ENCODE measurements at regions of chr10 and their contacts with region 1.

Region 1: GRCh38 chr10:77710759-77711682 is 73.4 kb upstream of the KCNMA1 start:
- DNase-seq: peak; percentile 97
- ATAC-seq: peak; percentile 98
- H3K4me3 ChIP-seq: peak overlapping the region; percentile 57
- H3K27ac ChIP-seq: no peak overlapping the region
- H3K4me1 ChIP-seq: peaks cover 10% of the 10 kb centered on the region; the same call in 1 of the 2 replicates
- H3K27me3 ChIP-seq: no peaks in the 10 kb centered on the region
- CTCF ChIP-seq: peak; percentile 100

Region 2: DNA sequence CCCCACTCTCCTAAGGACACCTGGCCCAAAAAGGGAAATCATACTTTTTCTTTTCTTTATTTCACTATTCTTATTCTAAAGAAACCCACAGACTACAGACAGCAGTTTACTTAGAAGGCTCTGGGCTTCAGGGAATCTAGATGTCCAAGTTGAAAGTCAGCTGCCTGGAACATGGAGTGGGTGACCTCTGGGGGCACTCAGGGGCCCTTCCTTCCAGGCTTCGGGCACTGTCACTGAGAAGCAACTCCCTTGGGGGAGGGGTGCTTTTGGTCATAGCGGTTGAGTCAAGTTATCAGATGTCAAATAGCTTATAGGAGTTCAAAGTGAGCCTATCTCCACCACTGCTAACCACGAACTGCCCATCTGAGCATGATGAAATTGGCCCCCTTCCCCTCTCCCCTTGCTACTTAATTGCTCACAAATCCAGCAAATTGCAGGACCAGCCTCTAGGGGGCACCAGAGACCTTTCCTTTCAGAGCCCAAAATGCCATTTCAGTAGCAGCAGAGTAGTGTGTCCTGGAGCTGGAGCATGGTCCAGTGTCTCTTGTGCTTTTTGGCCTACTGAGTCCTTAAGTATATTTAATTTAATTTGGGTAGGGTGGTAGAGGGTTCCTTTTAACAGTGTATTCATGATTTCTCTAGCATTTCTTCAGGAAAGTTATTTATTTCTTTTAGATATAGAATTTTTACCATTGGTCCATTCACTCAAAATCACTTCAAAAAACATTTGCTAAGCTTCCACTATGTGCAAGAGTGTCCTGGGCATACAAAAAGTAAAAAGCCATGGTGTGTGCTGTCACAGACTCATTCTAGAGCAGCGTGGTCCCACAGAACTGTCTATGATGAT is 537.2 kb before region 1 on chr10:
- CTCF ChIA-PET with region 1: interaction called, 28 read pairs
- POLR2A ChIA-PET with region 1: no interaction called
- intact Hi-C with region 1: loop called (anchors 2 kb)
- DNase-seq: peak; percentile 100
- ATAC-seq: peak; percentile 78
- H3K4me3 ChIP-seq: no peak overlapping the region
- H3K27ac ChIP-seq: no peak overlapping the region
- H3K4me1 ChIP-seq: peaks cover 16% of the 10 kb centered on the region
- H3K27me3 ChIP-seq: no peaks in the 10 kb centered on the region
- CTCF ChIP-seq: peak; percentile 100

Region 3: DNA sequence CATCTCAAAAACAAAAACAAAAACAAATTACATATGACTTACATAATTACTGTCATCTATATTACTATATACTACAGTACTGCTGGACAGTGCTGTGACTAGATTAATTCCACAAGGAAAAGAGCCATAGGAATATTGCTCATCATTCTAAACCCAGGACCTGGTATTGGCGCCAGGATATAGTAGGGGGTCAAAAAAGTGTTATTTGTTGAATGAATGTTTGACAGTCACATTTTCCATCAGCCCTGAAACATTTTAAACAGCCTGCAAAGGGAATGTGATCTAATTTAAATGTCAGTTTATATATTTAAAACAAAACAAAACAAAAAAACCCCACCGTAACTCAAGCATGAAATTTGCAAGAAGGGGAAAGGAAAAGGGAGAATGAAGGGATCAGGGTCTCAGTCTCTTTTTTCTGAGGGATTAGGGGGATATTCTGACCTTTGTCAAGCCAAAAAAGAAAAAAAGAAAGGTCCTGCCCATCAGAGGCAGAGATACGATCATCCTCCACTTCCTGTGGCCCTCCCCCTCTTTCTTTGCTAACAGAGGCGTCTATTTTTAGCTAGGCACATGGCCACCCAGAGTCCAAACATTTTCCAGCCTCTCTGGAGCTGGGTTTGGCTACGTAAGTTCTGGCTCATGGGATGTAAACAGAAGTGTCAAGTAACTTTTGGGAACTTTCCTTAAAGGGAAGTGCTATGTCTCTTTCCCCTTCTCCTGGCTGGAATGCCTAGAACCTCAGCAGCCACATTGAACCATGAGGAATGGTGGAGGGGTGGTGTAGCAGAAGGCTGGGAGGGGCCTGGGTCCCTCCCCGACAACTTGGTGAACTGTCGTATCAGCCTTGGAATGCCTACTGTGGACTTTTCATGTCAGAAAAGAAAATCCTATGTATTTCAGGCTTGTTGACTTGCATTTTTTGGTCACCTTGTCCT is 260.1 kb after region 1 on chr10:
- CTCF ChIA-PET with region 1: no interaction called
- POLR2A ChIA-PET with region 1: no interaction called
- intact Hi-C with region 1: no loop called
- DNase-seq: peak; percentile 99
- ATAC-seq: peak; percentile 89
- H3K4me3 ChIP-seq: no peak overlapping the region
- H3K27ac ChIP-seq: peak overlapping the region; percentile 53
- H3K4me1 ChIP-seq: peaks cover 14% of the 10 kb centered on the region
- H3K27me3 ChIP-seq: no peaks in the 10 kb centered on the region
- CTCF ChIP-seq: no peak